HAP-1 (cell line): ENCODE measurements at regions of chr3 and their contacts with region 1.

Region 1: GRCh38 chr3:161851941-161852566 is 355.4 kb downstream of the OTOL1 start:
- DNase-seq: peak; percentile 30 to 81
- H3K4me3 ChIP-seq: no peak overlapping the region
- H3K4me1 ChIP-seq: no peaks in the 10 kb centered on the region
- H3K27me3 ChIP-seq: peaks cover 6% of the 10 kb centered on the region

Region 2: GRCh38 chr3:161559177-161559998 is 292.7 kb before region 1 on chr3:
- in situ Hi-C with region 1: loop called (anchors 25 kb)
- DNase-seq: peak; percentile 38 to 66
- H3K4me3 ChIP-seq: no peak overlapping the region
- H3K4me1 ChIP-seq: peaks cover 3% of the 10 kb centered on the region
- H3K27me3 ChIP-seq: no peaks in the 10 kb centered on the region